Motor neuron (in vitro differentiated cells): ENCODE measurements at regions of chr1 and their contacts with region 1.

Region 1: DNA sequence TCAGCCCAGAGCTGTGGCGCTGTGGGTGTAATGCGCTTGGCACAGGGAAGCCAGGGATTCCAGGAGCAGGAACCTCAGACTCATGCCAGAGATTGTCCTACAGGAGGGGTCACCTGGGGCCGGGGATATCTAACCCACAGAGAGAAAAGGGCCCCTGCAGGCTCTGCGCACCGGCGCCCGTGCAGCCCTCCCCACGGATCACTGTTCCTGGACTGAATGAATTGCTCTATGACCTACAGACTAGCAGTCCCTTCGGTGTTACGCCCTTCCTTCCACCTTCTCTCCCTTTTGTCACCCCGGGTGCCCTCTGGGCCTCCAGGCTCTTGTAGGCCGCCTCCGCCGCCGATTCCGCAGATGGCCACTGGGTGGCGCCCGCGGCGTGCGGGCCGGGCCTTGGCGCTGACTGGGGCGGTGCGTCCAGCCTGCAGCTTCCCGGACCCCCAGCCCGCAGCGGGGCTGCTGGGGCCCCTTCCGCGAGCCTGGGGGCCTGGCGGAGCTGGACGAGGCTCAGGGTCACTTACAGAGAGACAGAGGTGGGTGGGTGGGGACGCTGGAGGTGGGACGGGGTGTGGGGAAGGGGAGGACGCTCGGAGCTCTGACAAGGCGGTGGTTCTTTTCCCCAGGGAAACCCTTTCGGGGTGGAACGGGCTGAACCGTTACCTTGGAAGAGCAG is 101.3 kb downstream of the IER5 start:
- ATAC-seq: peak; percentile 87 to 98 (median 96)
- H3K4me3 ChIP-seq: peak overlapping the region; percentile 14 to 34 (median 30)
- H3K27ac ChIP-seq: no peak overlapping the region
- H3K4me1 ChIP-seq: peaks cover 0 to 4% of the 10 kb centered on the region in 2 donors

Region 2: DNA sequence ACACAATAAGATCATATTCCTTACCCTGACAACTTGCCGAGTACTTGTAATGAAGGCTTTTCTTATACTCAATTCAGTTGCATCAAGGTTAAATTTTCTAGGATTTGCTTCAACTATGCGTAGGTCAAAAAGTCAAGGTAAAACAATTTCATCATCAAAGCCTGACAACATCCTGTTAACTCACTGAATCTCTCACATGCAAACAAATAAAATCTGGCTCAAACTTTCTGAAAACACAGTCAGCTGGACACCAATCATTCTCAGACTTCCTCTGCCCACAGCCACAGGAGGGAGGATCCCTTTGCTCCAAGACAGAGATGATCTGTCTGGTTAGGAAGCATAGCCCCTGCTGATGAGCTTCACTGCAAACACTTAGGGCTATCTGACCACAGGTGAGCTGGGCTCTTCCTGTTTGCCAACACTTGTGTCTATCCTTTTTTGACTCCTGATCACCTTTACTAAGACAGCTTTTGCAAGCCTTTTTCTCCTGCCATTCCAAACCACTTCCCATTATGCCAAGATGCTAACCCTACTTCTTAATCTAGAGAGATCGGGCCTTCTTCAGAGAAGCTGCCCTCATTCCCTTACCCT is 187.2 kb before region 1 on chr1:
- in situ Hi-C with region 1: no loop called
- ATAC-seq: no peak
- H3K4me3 ChIP-seq: no peak overlapping the region
- H3K27ac ChIP-seq: no peak overlapping the region
- H3K4me1 ChIP-seq: no peaks in the 10 kb centered on the region

Region 3: GRCh38 chr1:181284978-181285377 is 95.2 kb after region 1 on chr1:
- in situ Hi-C with region 1: no loop called
- ATAC-seq: no peak
- H3K4me3 ChIP-seq: no peak overlapping the region
- H3K27ac ChIP-seq: no peak overlapping the region
- H3K4me1 ChIP-seq: no peaks in the 10 kb centered on the region

Region 4: GRCh38 chr1:181416268-181416860 is 226.5 kb after region 1 on chr1:
- in situ Hi-C with region 1: loop called in 8 of 9 experiments (anchors 5 to 25 kb)
- ATAC-seq: no peak
- H3K4me3 ChIP-seq: no peak overlapping the region
- H3K27ac ChIP-seq: no peak overlapping the region
- H3K4me1 ChIP-seq: no peaks in the 10 kb centered on the region

Region 5: GRCh38 chr1:181424786-181425403 is 235.1 kb after region 1 on chr1:
- in situ Hi-C with region 1: loop called in 8 of 9 experiments (anchors 10 to 25 kb)
- ATAC-seq: peak; percentile 52 to 88 (median 66)
- H3K4me3 ChIP-seq: no peak overlapping the region
- H3K27ac ChIP-seq: no peak overlapping the region
- H3K4me1 ChIP-seq: no peaks in the 10 kb centered on the region

Region 6: GRCh38 chr1:181430015-181430885 is 240.4 kb after region 1 on chr1:
- in situ Hi-C with region 1: loop called in 6 of 9 experiments (anchors 10 kb)
- ATAC-seq: peak in 5 of 8 experiments; percentile 23 to 96 (median 46)
- H3K4me3 ChIP-seq: no peak overlapping the region
- H3K27ac ChIP-seq: no peak overlapping the region
- H3K4me1 ChIP-seq: no peaks in the 10 kb centered on the region

Region 7: DNA sequence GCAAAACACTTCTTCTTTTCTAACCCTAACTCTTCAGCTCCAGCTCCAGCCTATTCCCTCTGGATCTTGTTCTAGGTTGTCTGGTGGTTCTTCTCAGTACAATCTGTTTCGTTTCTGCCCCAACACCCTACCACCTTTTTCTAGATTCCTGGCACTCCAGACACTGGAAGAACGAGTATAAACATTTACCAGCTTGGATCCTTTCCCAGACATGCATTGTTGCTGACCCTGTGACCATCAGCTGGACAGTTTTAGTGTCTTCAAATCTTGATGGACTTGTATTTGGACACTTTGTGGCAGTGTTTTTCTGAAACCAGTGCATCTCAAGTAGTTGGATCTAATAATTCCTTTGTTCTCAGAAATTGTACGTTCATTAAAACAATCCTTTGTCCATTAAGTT is 262.9 kb after region 1 on chr1:
- in situ Hi-C with region 1: no loop called
- ATAC-seq: no peak
- H3K4me3 ChIP-seq: no peak overlapping the region
- H3K27ac ChIP-seq: no peak overlapping the region
- H3K4me1 ChIP-seq: no peaks in the 10 kb centered on the region